ENCODE measurements at regions of chr18 and their contacts with region 1.

Region 1: DNA sequence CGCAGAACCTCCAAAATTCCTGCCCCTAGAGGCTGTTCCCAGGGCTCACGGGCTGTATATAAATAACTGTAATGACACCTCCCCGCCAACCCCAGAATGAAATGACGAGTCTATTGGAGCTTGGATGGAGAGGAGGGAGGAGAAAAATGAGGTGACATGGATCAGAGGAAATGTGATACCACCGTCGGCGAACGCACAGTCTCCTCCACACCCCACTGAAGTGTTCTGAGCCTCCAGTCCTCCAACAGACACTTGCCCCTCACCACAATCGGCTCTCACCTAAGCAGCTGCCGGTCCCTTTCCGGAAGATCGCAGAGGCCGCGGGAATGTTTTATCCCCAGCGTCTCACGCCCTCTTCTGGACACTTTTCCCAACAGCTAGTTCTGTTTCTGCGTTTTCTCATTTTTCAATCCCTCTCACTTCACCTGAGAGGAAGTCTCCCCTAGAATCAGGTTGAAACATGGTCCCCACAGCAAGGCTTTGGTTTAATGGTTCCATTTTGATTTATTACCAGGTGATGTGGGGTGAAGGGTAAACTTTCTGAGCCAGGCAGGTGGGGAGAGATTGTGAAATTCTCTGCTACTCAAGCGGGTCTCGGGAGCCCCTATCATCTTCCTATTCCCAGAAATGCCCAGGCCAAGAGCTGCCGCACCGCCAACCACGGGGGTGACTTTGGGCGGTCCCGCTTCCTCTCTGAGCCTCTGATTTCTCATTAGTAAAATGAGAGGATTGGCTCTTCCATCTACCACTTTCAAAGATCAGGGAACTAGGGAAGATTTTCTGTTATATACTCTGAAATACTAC is 9.1 kb upstream of the MYO5B start:
- DNase-seq: peak in 2 of 3 donors; percentile 62 to 80
- ATAC-seq: peak; percentile 85
- H3K4me3 ChIP-seq: no peak overlapping the region
- H3K4me1 ChIP-seq: no peaks in the 10 kb centered on the region
- CTCF ChIP-seq: peak; percentile 50

Region 2: GRCh38 chr18:50009773-50010335 is 194.1 kb before region 1 on chr18:
- intact Hi-C with region 1: loop called in 1 of 2 experiments (anchors 10 kb)
- DNase-seq: peak; percentile 48 to 79 (median 64)
- ATAC-seq: peak; percentile 96
- H3K4me3 ChIP-seq: no peak overlapping the region
- H3K4me1 ChIP-seq: no peaks in the 10 kb centered on the region
- CTCF ChIP-seq: peak; percentile 32